MCF 10A (cell line): ENCODE measurements at regions of chr2 and their contacts with region 1.

Region 1: DNA sequence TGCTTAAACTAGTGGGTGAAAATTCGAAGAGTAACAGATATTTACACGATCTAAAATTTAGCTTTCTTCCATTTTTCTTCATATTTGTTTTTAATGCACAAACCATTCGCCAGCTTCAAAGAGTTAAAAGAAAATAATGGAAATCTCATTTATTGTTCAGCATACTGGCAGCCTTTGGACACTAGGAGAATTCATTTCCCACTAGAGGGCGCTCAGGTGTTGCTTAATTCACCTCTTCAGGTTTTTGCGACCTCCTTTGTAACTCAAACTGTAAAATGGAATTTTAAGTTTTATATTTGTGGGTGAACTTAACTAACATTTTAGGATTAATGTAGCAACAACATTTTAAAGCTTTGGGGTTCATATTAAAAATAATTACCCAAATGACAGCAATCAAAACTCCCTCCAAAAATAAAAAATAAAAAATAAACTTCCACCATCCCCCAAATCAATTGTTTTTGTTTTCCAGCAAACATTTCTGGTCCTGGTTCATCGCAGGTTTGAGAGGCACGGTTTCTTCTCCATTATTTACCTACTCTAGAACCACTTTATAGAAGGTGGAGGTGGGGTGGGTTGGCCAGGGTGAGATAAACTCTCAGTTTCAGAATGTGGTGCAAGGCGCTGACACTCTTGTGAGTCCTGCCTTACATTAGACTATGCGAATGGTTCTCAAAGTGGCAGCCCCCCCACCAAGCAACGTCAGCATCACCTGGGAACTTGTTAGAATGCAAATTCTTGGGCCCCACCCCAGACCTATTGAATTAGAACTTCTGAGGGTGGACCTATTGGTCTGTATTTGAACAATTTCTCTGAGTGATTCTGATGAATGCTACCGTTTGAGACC is 24.7 kb upstream of the PNPT1 start:
- DNase-seq: peak; percentile 86
- H3K4me3 Mint-ChIP-seq: no peak overlapping the region
- H3K27ac Mint-ChIP-seq: peak overlapping the region; percentile 25
- H3K4me1 Mint-ChIP-seq: no peaks in the 10 kb centered on the region
- H3K27me3 Mint-ChIP-seq: no peaks in the 10 kb centered on the region
- CTCF ChIP-seq: peak; percentile 77

Region 2: GRCh38 chr2:55732854-55733253 is 14.5 kb after region 1 on chr2:
- CTCF ChIA-PET with region 1: interaction called, 28 read pairs
- POLR2A ChIA-PET with region 1: interaction called, 3 read pairs
- intact Hi-C with region 1: no loop called
- DNase-seq: no peak
- H3K4me3 Mint-ChIP-seq: no peak overlapping the region
- H3K27ac Mint-ChIP-seq: no peak overlapping the region
- H3K4me1 Mint-ChIP-seq: no peaks in the 10 kb centered on the region
- H3K27me3 Mint-ChIP-seq: no peaks in the 10 kb centered on the region
- CTCF ChIP-seq: no peak

Region 3: GRCh38 chr2:55856936-55857335 is 138.5 kb after region 1 on chr2:
- CTCF ChIA-PET with region 1: interaction called, 13 read pairs
- POLR2A ChIA-PET with region 1: no interaction called
- intact Hi-C with region 1: loop called (anchors 10 kb)
- DNase-seq: peak; percentile 44
- H3K4me3 Mint-ChIP-seq: no peak overlapping the region
- H3K27ac Mint-ChIP-seq: peak overlapping the region; percentile 59
- H3K4me1 Mint-ChIP-seq: peaks cover 38% of the 10 kb centered on the region
- H3K27me3 Mint-ChIP-seq: no peaks in the 10 kb centered on the region
- CTCF ChIP-seq: no peak

Region 4: GRCh38 chr2:55961318-55961911 is 243.0 kb after region 1 on chr2:
- CTCF ChIA-PET with region 1: interaction called, 77 read pairs
- POLR2A ChIA-PET with region 1: no interaction called
- intact Hi-C with region 1: loop called (anchors 1 kb)
- DNase-seq: peak; percentile 74
- H3K4me3 Mint-ChIP-seq: no peak overlapping the region
- H3K27ac Mint-ChIP-seq: peak overlapping the region; percentile 25
- H3K4me1 Mint-ChIP-seq: peaks cover 29% of the 10 kb centered on the region
- H3K27me3 Mint-ChIP-seq: no peaks in the 10 kb centered on the region
- CTCF ChIP-seq: peak; percentile 43

Region 5: GRCh38 chr2:55986700-55987440 is 268.5 kb after region 1 on chr2:
- CTCF ChIA-PET with region 1: interaction called, 11 read pairs
- POLR2A ChIA-PET with region 1: no interaction called
- intact Hi-C with region 1: no loop called
- DNase-seq: no peak
- H3K4me3 Mint-ChIP-seq: no peak overlapping the region
- H3K27ac Mint-ChIP-seq: no peak overlapping the region
- H3K4me1 Mint-ChIP-seq: peaks cover 4% of the 10 kb centered on the region
- H3K27me3 Mint-ChIP-seq: no peaks in the 10 kb centered on the region
- CTCF ChIP-seq: no peak

Region 6: GRCh38 chr2:56018224-56018623 is 299.8 kb after region 1 on chr2:
- CTCF ChIA-PET with region 1: interaction called, 68 read pairs
- POLR2A ChIA-PET with region 1: no interaction called
- intact Hi-C with region 1: no loop called
- DNase-seq: no peak
- H3K4me3 Mint-ChIP-seq: no peak overlapping the region
- H3K27ac Mint-ChIP-seq: peak overlapping the region; percentile 35
- H3K4me1 Mint-ChIP-seq: peaks cover 5% of the 10 kb centered on the region
- H3K27me3 Mint-ChIP-seq: no peaks in the 10 kb centered on the region
- CTCF ChIP-seq: no peak